T-cell (primary cell): ENCODE measurements at regions of chr15 and their contacts with region 1.

Region 1: DNA sequence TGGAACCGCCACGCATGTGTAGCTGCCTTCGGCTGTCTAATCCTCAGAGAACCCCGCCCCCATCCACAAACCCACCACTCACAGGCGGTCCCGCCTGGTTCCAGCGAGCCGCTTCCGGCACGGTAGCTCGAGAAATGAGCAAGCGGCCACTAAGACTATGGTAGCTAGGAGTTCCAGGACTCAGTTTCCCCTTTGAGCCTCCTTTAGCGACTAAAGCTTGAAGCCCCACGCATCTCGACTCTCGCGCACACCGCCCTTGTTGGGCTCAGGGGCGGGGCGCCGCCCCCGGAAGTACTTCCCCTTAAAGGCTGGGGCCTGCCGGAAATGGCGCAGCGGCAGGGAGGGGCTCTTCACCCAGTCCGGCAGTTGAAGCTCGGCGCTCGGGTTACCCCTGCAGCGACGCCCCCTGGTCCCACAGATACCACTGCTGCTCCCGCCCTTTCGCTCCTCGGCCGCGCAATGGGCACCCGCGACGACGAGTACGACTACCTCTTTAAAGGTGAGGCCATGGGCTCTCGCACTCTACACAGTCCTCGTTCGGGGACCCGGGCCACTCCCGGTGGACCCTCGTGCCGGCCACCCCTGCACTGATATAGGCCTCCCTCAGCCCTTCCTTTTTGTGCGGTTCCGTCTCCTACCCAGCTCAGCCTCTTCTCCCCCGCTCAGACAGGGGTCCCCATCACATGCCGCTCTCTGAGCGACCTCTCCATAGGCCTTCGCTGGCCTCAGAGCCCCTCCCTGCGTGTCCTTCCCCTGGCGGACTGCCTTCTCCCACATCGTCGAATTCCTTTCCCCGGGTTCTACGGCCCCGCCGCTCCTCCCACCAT is at the start of gene RAB11A:
- DNase-seq: peak; percentile 88 to 96 (median 93)
- ATAC-seq: peak; percentile 93 to 94 (median 94)
- H3K4me3 ChIP-seq: peak within 1 kb of the TSS; percentile 89 to 99
- H3K4me3 Mint-ChIP-seq: peak within 1 kb of the TSS; percentile 95 to 100 (median 98)
- H3K27ac ChIP-seq: peak within 1 kb of the TSS; percentile 98
- H3K27ac Mint-ChIP-seq: peak within 1 kb of the TSS; percentile 97
- H3K4me1 ChIP-seq: peaks cover 0 to 27% of the 10 kb centered on the region in 2 experiments
- H3K4me1 Mint-ChIP-seq: peaks cover 28 to 39% (median 35%) of the 10 kb centered on the region in 3 donors
- H3K27me3 ChIP-seq: no peaks in the 10 kb centered on the region
- H3K27me3 Mint-ChIP-seq: no peaks in the 10 kb centered on the region
- total RNA-seq, gene RAB11A: 82.4 to 103 (median 97.5) TPM

Region 2: GRCh38 chr15:65738649-65739048 is 130.7 kb before region 1 on chr15:
- CTCF ChIA-PET with region 1: no interaction called
- POLR2A ChIA-PET with region 1: no interaction called
- DNase-seq: no peak
- ATAC-seq: no peak
- H3K4me3 ChIP-seq: no peak overlapping the region
- H3K4me3 Mint-ChIP-seq: no peak overlapping the region
- H3K27ac ChIP-seq: no peak overlapping the region
- H3K27ac Mint-ChIP-seq: no peak overlapping the region
- H3K4me1 ChIP-seq: no peaks in the 10 kb centered on the region
- H3K4me1 Mint-ChIP-seq: peaks cover 0 to 2% (median under 1%) of the 10 kb centered on the region in 3 donors
- H3K27me3 ChIP-seq: no peaks in the 10 kb centered on the region
- H3K27me3 Mint-ChIP-seq: no peaks in the 10 kb centered on the region

Region 3: DNA sequence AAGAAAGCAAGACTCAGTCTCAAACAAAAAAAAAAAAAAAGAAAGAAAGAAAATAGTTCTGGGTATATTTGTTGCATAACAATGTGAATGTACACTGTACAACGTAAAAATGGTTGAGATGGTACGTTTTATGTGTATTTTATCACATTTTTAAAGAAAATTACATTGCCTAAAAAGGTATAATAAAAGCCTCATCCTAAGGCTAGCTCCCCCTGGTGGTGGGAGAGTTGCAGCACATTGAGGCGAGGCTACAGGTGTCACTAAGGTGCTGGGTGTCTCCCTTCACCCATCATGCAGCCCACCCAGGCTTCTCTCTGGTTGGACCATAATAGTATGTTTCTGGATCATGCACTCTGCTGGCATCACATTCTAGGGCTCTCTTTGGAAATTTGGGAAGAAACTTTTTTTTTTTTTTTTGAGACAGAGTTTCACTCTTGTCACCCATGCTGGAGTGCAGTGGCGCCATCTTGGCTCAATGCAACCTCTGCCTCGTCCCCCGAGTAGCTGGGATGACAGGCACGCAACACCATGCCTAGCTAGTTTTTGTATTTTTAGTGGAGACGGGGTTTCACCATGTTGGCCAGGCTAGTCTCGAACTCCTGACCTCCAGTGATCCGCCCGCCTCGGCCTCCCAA is 12.4 kb before region 1 on chr15:
- CTCF ChIA-PET with region 1: interaction called in 1 of 2 experiments, 11 read pairs
- POLR2A ChIA-PET with region 1: interaction called, 3 read pairs
- DNase-seq: peak; percentile 57 to 91 (median 78)
- ATAC-seq: peak; percentile 50 to 86 (median 78)
- H3K4me3 ChIP-seq: no peak overlapping the region
- H3K4me3 Mint-ChIP-seq: no peak overlapping the region
- H3K27ac ChIP-seq: no peak overlapping the region
- H3K27ac Mint-ChIP-seq: peak overlapping the region in 1 of 2 donors; percentile 39
- H3K4me1 ChIP-seq: peaks cover 2 to 6% of the 10 kb centered on the region in 2 experiments
- H3K4me1 Mint-ChIP-seq: peaks cover 6 to 15% (median 7%) of the 10 kb centered on the region in 3 donors
- H3K27me3 ChIP-seq: no peaks in the 10 kb centered on the region
- H3K27me3 Mint-ChIP-seq: no peaks in the 10 kb centered on the region